ENCODE measurements at regions of chr3 and their contacts with region 1.

Region 1: GRCh38 chr3:112734718-112735350 is 93.9 kb upstream of the CCDC80 start:
- DNase-seq: peak; percentile 68

Region 2: DNA sequence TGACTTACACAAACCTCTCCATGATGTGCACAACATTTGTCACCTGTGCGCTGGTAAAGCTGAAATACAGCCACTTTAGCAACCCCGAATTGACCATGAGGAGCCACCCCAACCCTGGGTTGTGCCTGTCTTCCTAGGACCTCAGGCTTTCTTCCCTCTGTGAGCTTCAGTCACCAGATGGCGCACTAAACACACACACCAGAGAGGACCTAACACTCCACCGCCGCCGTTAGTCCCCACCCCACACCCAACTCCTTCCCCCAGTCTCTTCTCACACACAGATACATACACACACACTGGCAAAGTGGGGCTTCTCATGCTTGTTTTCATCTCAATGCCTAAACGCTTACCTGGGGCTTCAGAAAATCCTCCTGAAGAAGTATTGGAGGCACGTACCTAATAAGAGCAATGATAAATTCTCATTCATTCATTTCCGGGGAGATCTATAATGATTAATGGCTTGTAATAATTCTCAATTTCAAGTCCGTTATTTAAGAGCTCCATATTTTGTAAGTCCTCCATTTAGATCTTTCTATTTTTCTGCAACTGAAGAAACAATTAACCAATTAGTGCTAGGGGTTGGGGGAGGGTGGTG is 91.8 kb before region 1 on chr3:
- CTCF ChIA-PET with region 1: interaction called, 12 read pairs
- POLR2A ChIA-PET with region 1: interaction called, 6 read pairs
- DNase-seq: peak; percentile 84

Region 3: DNA sequence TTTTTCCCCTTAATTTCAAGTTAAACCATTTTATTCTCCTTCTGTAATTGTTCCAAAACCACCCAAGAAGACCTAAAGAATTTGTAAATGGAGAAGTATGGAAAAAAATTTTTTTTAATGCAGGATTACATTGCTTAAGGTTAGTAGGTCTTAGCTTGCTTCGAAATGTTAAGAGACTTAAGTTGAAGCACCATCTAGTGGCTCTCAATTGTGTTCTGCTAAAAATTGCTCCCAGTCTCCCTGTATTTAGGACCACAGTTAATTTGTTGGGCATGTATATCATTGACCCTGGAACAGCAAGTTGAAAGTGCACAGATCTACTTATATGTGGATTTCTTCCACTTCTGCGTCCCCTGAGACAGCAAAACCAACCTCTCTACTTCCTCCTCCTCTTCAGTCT is 79.4 kb after region 1 on chr3:
- CTCF ChIA-PET with region 1: interaction called, 15 read pairs
- POLR2A ChIA-PET with region 1: interaction called, 3 read pairs
- DNase-seq: no peak